GM12878 (cell line): ENCODE measurements at regions of chr12 and their contacts with region 1.

Region 1: GRCh38 chr12:7142056-7142644 is 12.0 kb downstream of the CLSTN3 start:
- DNase-seq: no peak
- ATAC-seq: peak; percentile 95
- H3K4me3 ChIP-seq: no peak overlapping the region
- H3K27ac ChIP-seq: no peak overlapping the region
- H3K4me1 ChIP-seq: no peaks in the 10 kb centered on the region
- H3K27me3 ChIP-seq: no peaks in the 10 kb centered on the region
- CTCF ChIP-seq: peak; percentile 55 to 68 (median 59); a peak in 5 of 6 replicates
- EP300 ChIP-seq: no peak
- POLR2A ChIP-seq: no peak
- RAD21 ChIP-seq: peak; percentile 57

Region 2: DNA sequence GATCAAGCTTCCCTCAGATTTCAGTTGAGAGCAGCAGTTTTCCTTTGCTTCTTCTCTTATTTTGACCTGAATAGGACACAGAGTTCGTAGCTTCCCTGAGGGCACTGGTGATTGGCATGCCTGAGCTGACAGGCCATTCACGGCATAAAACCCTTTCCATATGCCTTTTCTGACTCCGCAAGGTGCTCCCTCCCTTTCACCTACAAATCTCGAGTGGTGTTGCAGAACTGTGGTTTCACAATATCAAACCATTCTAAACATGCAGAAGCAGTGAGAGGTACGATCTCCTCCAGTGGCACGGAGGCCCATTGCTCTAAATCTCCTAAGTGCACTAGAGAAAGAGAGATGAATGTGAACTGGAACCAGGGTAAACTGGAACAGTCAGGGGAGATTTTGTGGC is 11.9 kb after region 1 on chr12:
- CTCF ChIA-PET with region 1: interaction called, 11 read pairs
- POLR2A ChIA-PET with region 1: no interaction called
- RAD21 ChIA-PET with region 1: no interaction called
- SMC1A ChIA-PET with region 1: no interaction called
- in situ Hi-C with region 1: no loop called
- intact Hi-C with region 1: no loop called
- DNase-seq: no peak
- ATAC-seq: no peak
- H3K4me3 ChIP-seq: no peak overlapping the region
- H3K27ac ChIP-seq: no peak overlapping the region
- H3K4me1 ChIP-seq: no peaks in the 10 kb centered on the region
- H3K27me3 ChIP-seq: no peaks in the 10 kb centered on the region
- CTCF ChIP-seq: no peak
- EP300 ChIP-seq: no peak
- POLR2A ChIP-seq: no peak
- RAD21 ChIP-seq: no peak

Region 3: DNA sequence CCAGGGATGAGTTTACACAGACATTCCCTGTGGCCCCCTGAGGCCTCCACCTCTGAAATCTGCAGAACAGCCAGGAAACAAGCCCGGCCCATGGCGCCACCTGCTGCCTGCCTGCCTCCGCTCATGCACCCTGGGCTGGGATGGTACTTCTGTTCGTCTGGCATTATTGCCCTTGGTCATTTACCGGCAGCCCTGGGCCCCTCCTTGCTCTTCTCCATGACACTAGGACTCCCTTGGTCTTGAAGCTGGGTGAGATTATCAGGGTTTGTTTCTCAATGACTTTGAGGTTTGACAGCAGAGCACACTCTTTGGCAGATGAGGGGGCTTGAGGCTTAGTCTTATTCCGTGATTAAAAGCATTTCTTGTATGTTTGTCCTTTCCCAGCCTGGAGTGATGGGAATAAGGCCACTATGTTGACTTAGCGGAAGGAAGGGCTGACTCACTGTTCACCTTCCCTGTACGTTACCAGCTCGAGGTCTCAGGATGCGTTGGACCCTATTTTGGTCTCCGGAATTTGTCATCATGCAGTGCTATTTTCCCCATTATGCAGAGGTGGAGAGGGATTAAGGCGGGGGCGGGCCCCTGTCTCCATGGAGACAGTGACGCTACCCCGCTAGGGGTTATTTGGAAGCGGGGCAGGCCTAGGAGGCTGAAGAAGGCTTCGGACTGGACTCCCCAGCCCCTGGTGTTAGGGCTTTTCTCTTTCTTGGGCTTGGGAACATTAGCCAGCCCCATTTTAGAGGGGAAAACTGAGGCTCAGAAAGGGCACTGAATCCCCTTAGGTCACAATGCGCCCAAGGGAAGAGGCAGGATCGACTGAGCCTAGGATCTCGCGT is 46.6 kb after region 1 on chr12:
- CTCF ChIA-PET with region 1: interaction called, 5 read pairs
- POLR2A ChIA-PET with region 1: no interaction called
- RAD21 ChIA-PET with region 1: no interaction called
- SMC1A ChIA-PET with region 1: interaction called, 3 read pairs
- in situ Hi-C with region 1: no loop called
- intact Hi-C with region 1: loop called (anchors 2 kb)
- DNase-seq: peak; percentile 17
- ATAC-seq: peak; percentile 73
- H3K4me3 ChIP-seq: peak overlapping the region; percentile 74
- H3K27ac ChIP-seq: peak overlapping the region; percentile 59
- H3K4me1 ChIP-seq: 0 out of 2 replicates have a peak, but pooled peaks cover 3% of the 10 kb centered on the region
- H3K27me3 ChIP-seq: no peaks in the 10 kb centered on the region
- CTCF ChIP-seq: peak; percentile 71 to 78 (median 76)
- EP300 ChIP-seq: no peak
- POLR2A ChIP-seq: no peak
- RAD21 ChIP-seq: peak; percentile 58

Region 4: GRCh38 chr12:7387289-7387688 is 245.1 kb after region 1 on chr12:
- CTCF ChIA-PET with region 1: no interaction called
- POLR2A ChIA-PET with region 1: no interaction called
- RAD21 ChIA-PET with region 1: no interaction called
- SMC1A ChIA-PET with region 1: no interaction called
- in situ Hi-C with region 1: no loop called
- intact Hi-C with region 1: no loop called
- DNase-seq: no peak
- ATAC-seq: no peak
- H3K4me3 ChIP-seq: no peak overlapping the region
- H3K27ac ChIP-seq: no peak overlapping the region
- H3K4me1 ChIP-seq: no peaks in the 10 kb centered on the region
- H3K27me3 ChIP-seq: no peaks in the 10 kb centered on the region
- CTCF ChIP-seq: no peak
- EP300 ChIP-seq: no peak
- POLR2A ChIP-seq: no peak
- RAD21 ChIP-seq: no peak

Region 5: DNA sequence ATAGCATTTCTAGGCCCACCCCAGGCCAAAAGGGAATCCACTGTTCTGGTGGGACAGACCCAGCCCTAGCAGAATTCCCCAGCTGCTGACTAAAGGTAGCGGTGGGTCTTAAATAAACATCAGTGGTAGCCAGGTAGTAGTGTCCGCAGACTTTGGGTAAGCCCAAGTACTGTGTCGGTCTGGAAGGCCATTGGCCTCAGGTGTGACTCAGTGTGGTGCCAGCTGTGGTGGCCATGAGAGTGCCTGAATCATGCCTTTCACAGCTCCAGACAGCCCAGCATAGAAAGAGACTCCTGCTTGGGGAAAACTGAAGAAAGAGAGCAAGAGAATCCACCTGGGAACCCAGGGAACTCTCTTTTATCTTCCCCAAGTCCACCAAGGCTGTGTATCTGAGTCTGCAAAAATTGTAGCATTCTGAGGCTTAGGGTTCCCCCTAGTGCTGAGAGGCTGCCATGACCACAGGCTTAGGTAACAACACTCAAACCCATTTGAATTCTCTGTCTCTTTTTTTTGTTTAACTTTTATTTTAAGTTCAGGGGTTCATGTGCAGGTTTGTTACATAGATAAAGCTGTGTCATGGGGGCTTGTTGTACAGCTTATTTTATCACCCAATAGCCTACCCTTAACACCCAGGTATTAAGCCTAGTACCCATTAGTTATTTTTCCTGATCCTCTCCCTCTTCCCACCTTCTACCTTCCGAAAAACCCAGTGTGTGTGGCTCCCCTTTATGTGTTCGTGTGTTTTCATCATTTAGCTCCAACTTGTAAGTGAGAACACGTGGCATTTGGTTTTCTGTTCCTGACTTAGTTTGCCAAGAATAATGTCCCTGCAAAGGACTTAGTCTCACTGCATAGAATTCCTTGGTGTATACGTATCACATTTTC is 318.5 kb after region 1 on chr12:
- CTCF ChIA-PET with region 1: no interaction called
- POLR2A ChIA-PET with region 1: no interaction called
- RAD21 ChIA-PET with region 1: no interaction called
- SMC1A ChIA-PET with region 1: no interaction called
- in situ Hi-C with region 1: no loop called
- intact Hi-C with region 1: loop called (anchors 2 kb)
- DNase-seq: no peak
- ATAC-seq: peak; percentile 92
- H3K4me3 ChIP-seq: no peak overlapping the region
- H3K27ac ChIP-seq: no peak overlapping the region
- H3K4me1 ChIP-seq: no peaks in the 10 kb centered on the region
- H3K27me3 ChIP-seq: no peaks in the 10 kb centered on the region
- CTCF ChIP-seq: peak; percentile 81 to 87 (median 84)
- EP300 ChIP-seq: no peak
- POLR2A ChIP-seq: no peak
- RAD21 ChIP-seq: peak; percentile 88

Region 6: DNA sequence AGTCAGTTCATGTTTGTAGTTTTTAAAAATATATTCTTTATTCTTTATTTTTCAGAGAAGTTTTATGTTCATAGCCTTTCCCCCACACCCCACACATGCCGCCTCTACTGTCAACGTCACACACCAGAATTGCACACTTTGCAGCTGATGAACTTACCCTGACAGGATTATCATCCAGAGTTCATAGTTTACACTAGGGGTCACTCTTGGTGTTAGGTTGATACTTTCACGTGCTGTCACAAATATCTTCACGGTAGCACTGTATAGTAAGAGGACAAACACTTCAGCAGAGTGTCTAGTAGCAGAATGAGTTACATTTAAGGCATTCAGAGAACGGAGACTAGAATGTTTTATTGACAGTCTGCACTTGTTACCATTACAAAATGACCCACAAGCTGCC is 574.2 kb after region 1 on chr12:
- CTCF ChIA-PET with region 1: no interaction called
- POLR2A ChIA-PET with region 1: no interaction called
- RAD21 ChIA-PET with region 1: no interaction called
- SMC1A ChIA-PET with region 1: no interaction called
- in situ Hi-C with region 1: no loop called
- intact Hi-C with region 1: no loop called
- DNase-seq: no peak
- ATAC-seq: no peak
- H3K4me3 ChIP-seq: no peak overlapping the region
- H3K27ac ChIP-seq: no peak overlapping the region
- H3K4me1 ChIP-seq: no peaks in the 10 kb centered on the region
- H3K27me3 ChIP-seq: no peaks in the 10 kb centered on the region
- CTCF ChIP-seq: peak in 2 of 3 experiments; percentile 19 to 33; a peak in 3 of 6 replicates
- EP300 ChIP-seq: no peak
- POLR2A ChIP-seq: no peak
- RAD21 ChIP-seq: peak; percentile 49